ENCODE measurements at regions of chr2 and their contacts with region 1.

Region 1: GRCh38 chr2:32946314-32947075 is at the start of gene LTBP1:
- DNase-seq: peak; percentile 77
- H3K4me3 ChIP-seq: peak within 1 kb of the TSS; percentile 50 to 86 (median 55)
- H3K27ac ChIP-seq: peak within 1 kb of the TSS; percentile 58
- H3K4me1 ChIP-seq: peaks cover 10% of the 10 kb centered on the region
- H3K27me3 ChIP-seq: no peaks in the 10 kb centered on the region
- CTCF ChIP-seq: peak; percentile 88 to 90
- POLR2A ChIP-seq: peak; percentile 14
- total RNA-seq, gene LTBP1: 68.2 and 107 TPM in 2 replicates

Region 2: DNA sequence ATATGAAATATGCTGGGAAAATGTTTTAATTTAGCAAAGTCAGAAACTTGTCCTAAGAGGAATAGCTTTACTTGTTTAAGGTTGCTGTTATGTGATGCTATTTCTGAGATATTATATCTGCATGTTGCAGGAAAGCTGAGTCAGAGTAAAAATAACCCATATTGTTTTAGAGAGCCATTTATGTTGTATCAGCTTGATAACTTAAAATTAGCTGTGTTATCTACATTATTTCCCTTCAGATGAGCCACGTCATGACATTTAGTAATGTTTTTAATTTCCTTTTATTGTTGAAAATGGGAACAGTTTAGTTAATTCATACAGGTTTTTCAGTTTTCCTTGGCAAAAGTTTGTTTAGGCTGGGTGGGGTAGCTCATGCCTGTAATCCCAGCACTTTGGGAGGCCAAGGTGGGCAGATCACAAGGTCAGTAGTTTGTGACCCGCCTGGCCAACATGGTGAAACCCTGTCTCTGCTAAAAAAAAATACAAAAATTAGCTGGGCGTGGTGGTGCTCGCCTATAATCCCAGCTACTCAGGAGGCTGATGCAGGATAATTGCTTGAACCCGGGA is 262.9 kb before region 1 on chr2:
- CTCF ChIA-PET with region 1: no interaction called
- POLR2A ChIA-PET with region 1: no interaction called
- dilution Hi-C with region 1: no loop called
- intact Hi-C with region 1: loop called (anchors 1 kb)
- DNase-seq: peak; percentile 93
- H3K4me3 ChIP-seq: peak overlapping the region in 1 of 3 experiments; percentile 8
- H3K27ac ChIP-seq: peak overlapping the region; percentile 65
- H3K4me1 ChIP-seq: peaks cover 23% of the 10 kb centered on the region
- H3K27me3 ChIP-seq: no peaks in the 10 kb centered on the region
- CTCF ChIP-seq: no peak
- POLR2A ChIP-seq: peak; percentile 69

Region 3: GRCh38 chr2:32798829-32799228 is 147.7 kb before region 1 on chr2:
- CTCF ChIA-PET with region 1: interaction called, 3 read pairs
- POLR2A ChIA-PET with region 1: no interaction called
- dilution Hi-C with region 1: no loop called
- intact Hi-C with region 1: loop called (anchors 2 kb)
- DNase-seq: peak; percentile 90
- H3K4me3 ChIP-seq: no peak overlapping the region
- H3K27ac ChIP-seq: peak overlapping the region; percentile 50
- H3K4me1 ChIP-seq: peaks cover 16% of the 10 kb centered on the region
- H3K27me3 ChIP-seq: no peaks in the 10 kb centered on the region
- CTCF ChIP-seq: no peak
- POLR2A ChIP-seq: no peak

Region 4: DNA sequence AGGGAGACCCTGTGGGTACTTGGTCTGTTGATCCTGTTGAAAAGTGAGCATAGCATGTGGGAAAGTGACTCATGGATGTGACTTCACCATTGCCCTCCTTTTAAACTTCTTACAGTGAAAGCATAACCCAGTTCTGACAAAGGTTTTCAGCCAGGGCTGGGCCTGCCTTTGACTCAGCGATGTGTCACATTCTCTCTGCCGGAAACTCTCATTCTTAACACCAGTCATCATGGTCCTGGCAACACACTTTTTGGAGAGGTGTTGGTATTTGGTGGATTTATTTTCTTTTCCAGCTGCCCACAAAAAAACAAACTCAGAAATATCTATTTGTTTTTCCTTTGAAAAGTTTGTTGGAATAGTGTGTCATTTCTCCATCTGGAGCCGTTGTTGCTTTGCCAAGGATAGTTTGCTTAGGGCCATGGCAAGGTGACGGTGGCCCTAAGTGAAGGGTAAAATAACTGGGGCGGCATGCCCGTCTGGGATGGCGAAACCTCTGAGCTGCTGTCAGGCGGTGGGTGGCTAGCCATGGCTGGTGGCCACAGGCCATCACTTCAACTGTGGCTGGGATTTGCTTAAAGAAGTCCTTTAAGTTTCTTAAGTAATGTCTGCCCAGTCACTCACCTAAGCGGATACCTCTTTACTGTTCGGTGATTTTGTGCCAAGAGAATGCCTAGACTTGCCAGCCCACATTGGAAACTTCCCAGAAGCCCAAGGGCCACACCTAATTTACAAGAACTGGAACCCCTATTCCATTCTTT is 123.6 kb after region 1 on chr2:
- CTCF ChIA-PET with region 1: interaction called, 3 read pairs
- POLR2A ChIA-PET with region 1: no interaction called
- dilution Hi-C with region 1: no loop called
- intact Hi-C with region 1: loop called (anchors 5 kb)
- DNase-seq: peak; percentile 98
- H3K4me3 ChIP-seq: no peak overlapping the region
- H3K27ac ChIP-seq: peak overlapping the region; percentile 98
- H3K4me1 ChIP-seq: peaks cover 60% of the 10 kb centered on the region
- H3K27me3 ChIP-seq: no peaks in the 10 kb centered on the region
- CTCF ChIP-seq: no peak
- POLR2A ChIP-seq: no peak

Region 5: GRCh38 chr2:33380001-33380609 is 433.6 kb after region 1 on chr2:
- CTCF ChIA-PET with region 1: no interaction called
- POLR2A ChIA-PET with region 1: no interaction called
- dilution Hi-C with region 1: no loop called
- intact Hi-C with region 1: loop called (anchors 1 kb)
- DNase-seq: no peak
- H3K4me3 ChIP-seq: no peak overlapping the region
- H3K27ac ChIP-seq: no peak overlapping the region
- H3K4me1 ChIP-seq: peaks cover 3% of the 10 kb centered on the region
- H3K27me3 ChIP-seq: no peaks in the 10 kb centered on the region
- CTCF ChIP-seq: peak; percentile 44 to 58
- POLR2A ChIP-seq: no peak